ENCODE measurements at regions of chrX and their contacts with region 1.

Region 1: GRCh38 chrX:10922158-10922557 is 189.0 kb upstream of the HCCS start:
- DNase-seq: no peak
- H3K4me3 ChIP-seq: no peak overlapping the region
- H3K27ac ChIP-seq: no peak overlapping the region
- H3K4me1 ChIP-seq: no peaks in the 10 kb centered on the region
- H3K27me3 ChIP-seq: no peaks in the 10 kb centered on the region
- CTCF ChIP-seq: no peak
- EP300 ChIP-seq: no peak
- POLR2A ChIP-seq: no peak

Region 2: DNA sequence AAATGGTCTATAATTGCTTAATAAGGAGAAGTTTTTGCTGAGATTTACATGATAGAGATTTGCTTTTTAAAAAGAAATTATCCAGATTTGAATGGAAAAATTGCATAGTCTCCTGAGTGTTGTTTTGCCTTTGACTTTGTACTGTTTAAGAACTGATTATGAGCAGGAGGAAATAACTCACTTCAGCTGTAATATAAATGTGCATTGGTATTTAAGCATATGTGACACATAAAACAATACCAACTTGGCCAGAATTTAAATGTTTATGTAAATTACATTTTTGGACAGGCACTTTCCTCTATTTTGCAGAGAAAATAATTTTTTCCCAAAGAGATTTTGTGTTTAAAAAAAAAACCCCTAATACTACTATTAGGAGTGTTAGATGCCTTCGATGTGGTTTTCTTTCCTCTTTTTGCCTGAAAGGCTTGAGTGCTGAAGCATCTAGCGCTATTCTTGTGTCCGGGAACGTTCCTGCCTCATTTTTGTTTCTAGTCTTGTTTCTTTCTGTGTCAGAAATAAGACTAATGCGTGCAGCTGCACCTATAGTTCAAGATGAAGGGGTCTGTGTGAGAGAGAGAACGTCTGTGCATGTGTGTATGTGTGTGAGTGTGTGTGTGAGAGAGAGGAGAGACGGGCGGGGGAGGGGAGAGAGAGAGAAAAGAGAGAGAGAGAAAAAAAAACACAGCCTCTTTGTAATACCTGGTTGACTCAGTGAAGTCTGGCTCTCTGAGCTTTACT is 1396.5 kb before region 1 on chrX:
- intact Hi-C with region 1: loop called in 1 of 4 experiments (anchors 5 kb)
- DNase-seq: no peak
- H3K4me3 ChIP-seq: no peak overlapping the region
- H3K27ac ChIP-seq: no peak overlapping the region
- H3K4me1 ChIP-seq: no peaks in the 10 kb centered on the region
- H3K27me3 ChIP-seq: no peaks in the 10 kb centered on the region
- CTCF ChIP-seq: no peak
- EP300 ChIP-seq: no peak
- POLR2A ChIP-seq: no peak

Region 3: GRCh38 chrX:10945498-10945897 is 23.3 kb after region 1 on chrX:
- intact Hi-C with region 1: loop called in 1 of 4 experiments (anchors 2 kb)
- DNase-seq: no peak
- H3K4me3 ChIP-seq: no peak overlapping the region
- H3K27ac ChIP-seq: no peak overlapping the region
- H3K4me1 ChIP-seq: no peaks in the 10 kb centered on the region
- H3K27me3 ChIP-seq: no peaks in the 10 kb centered on the region
- CTCF ChIP-seq: no peak
- EP300 ChIP-seq: no peak
- POLR2A ChIP-seq: no peak

Measured in ovary (tissue), 10 donors.